GM13976 (cell line): ENCODE measurements at regions of chr13 and their contacts with region 1.

Region 1: GRCh38 chr13:111228262-111229144 is 91.9 kb upstream of the TEX29 start:
- DNase-seq: no peak
- CTCF ChIP-seq: no peak

Region 2: DNA sequence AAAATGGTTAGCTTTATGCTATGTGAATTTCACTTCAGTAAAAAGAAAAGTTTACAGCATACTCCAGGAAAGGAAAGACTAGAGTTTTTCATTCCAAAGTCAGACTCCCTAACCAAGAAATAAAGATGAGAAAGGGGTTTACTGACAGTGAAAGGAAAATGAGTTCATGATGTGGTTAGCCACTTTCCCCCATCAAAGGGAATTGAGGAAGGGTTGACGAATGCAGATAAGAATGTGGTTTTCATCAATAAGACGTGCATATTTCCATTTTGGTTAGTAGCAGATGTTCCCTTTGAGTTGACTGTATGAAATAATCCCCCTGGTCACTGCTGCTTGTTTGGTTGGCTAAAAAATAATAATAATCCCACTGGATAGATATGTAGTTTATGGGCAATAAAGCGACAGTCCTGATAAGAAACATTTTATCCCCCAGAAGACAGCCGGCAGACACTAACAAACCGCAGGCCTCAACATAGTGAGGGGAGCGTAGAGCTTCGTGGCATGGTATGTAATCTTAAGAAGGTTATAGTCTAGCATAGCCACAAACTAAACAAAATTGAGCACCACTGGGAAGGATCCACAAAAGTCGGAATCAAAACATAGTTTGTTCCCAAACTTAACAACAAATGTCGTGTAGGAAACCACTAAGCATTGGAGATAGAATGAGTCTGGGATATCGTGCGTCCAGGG is 806.7 kb before region 1 on chr13:
- in situ Hi-C with region 1: no loop called
- DNase-seq: no peak
- CTCF ChIP-seq: no peak

Region 3: DNA sequence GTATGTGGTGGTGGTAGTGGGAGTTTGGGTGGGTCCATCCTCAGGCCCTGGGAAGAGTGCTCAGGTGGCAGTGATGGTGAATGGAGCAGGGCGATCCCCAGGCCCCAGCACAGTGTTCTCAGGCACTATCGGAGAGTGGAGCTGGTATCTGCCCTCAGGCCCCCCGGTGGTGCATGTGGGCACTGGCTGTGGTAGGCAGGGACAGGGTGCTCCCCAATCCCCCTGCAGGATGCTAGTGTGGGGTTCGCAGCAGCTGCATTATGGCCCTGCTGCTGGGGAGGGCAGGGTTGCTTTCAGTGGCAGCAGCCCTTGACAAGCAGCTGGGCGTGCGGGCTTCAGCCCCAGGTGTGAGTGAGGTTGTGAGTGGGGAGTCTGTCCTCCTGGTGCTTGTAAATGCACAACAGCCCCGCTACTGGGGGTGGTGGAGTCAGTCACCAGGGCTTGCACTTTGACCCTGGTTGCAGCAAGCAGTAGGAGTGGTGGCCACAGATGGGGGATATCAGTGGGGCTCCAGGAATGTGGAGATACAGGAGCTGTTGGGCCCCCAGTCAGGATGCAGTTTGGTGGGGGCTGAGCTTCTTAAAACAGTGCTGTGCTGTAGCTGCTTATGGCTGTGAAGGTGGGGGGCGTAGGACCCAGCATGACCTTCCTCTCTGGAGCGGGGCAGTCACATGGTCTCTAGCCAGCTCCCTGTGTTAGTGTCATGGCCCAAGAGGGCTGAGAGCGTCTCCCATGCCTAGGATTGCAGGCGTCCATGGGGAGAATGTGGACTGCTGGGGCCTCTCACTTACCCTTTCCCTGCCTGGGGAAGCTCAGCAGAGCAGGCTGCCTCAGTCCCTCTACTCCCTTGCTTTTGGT is 152.1 kb before region 1 on chr13:
- in situ Hi-C with region 1: loop called (anchors 10 kb)
- DNase-seq: no peak
- CTCF ChIP-seq: no peak